Activated CD4-positive, alpha-beta memory T cell treated with anti-CD3 and anti-CD28 coated beads, Interleukin-2, amount 10 ng/mL, durations not matched to agents 7 days and 5 days (primary cell): ENCODE measurements at regions of chr13 and their contacts with region 1.

Region 1: GRCh38 chr13:40221460-40222201 is 444.8 kb downstream of the FOXO1 start:
- DNase-seq: peak; percentile 42
- H3K4me3 Mint-ChIP-seq: peak overlapping the region; percentile 5
- H3K27ac Mint-ChIP-seq: peak overlapping the region; percentile 74
- H3K4me1 Mint-ChIP-seq: peaks cover 31% of the 10 kb centered on the region
- H3K27me3 Mint-ChIP-seq: no peaks in the 10 kb centered on the region

Region 2: DNA sequence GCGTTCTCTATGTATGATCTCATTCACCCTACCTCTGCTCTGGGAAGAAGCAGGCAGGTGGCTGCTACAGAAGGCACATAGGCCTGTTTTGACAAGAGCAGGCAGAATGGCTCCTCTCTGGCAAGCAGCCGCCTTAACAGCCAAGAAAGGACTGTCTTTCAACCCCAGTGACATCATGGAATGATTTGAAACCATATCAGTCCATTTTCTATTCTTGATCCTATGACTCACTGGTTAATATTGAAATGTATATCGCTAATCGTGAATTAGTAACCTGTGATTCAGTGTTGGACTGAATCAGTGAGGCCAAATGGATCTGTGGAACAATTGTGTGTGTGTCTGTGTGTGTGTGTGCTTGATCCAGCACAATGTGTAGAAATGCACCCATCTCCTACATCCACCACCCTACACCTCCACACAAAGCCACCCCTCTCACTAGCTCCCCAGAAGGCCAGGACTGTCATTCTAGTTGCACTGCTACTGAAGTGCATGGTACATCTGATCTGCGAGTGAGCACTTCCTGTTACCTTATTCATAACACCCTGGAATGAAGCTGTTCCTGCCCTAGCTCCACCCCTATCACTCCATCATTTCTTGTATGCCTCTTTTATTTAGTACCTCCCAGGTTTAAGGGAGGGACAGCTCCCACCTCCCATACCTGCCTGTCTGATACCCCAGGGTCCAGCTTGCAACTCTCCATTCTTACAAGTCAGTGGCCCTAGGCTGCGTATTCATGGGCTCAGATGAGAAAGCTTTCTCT is 15.2 kb before region 1 on chr13:
- CTCF ChIA-PET with region 1: no interaction called
- POLR2A ChIA-PET with region 1: interaction called, 12 read pairs
- DNase-seq: peak; percentile 44
- H3K4me3 Mint-ChIP-seq: peak overlapping the region; percentile 31
- H3K27ac Mint-ChIP-seq: peak overlapping the region; percentile 96
- H3K4me1 Mint-ChIP-seq: peaks cover 31% of the 10 kb centered on the region
- H3K27me3 Mint-ChIP-seq: no peaks in the 10 kb centered on the region

Region 3: GRCh38 chr13:40445557-40445990 is 223.9 kb after region 1 on chr13:
- CTCF ChIA-PET with region 1: no interaction called
- POLR2A ChIA-PET with region 1: no interaction called
- DNase-seq: peak; percentile 18
- H3K4me3 Mint-ChIP-seq: no peak overlapping the region
- H3K27ac Mint-ChIP-seq: no peak overlapping the region
- H3K4me1 Mint-ChIP-seq: peaks cover 19% of the 10 kb centered on the region
- H3K27me3 Mint-ChIP-seq: no peaks in the 10 kb centered on the region